ENCODE measurements at regions of chr3 and their contacts with region 1.

Region 1: GRCh38 chr3:53122933-53123305 is 7.3 kb downstream of the RFT1 start:
- DNase-seq: peak in 2 of 14 experiments; percentile 48 to 57
- ATAC-seq: no peak
- H3K4me3 ChIP-seq: no peak overlapping the region
- H3K4me3 Mint-ChIP-seq: no peak overlapping the region
- H3K27ac ChIP-seq: no peak overlapping the region
- H3K27ac Mint-ChIP-seq: no peak overlapping the region
- H3K4me1 ChIP-seq: no peaks in the 10 kb centered on the region
- H3K4me1 Mint-ChIP-seq: peaks cover 4% of the 10 kb centered on the region
- H3K27me3 ChIP-seq: no peaks in the 10 kb centered on the region
- H3K27me3 Mint-ChIP-seq: no peaks in the 10 kb centered on the region
- CTCF ChIP-seq: no peak

Region 2: GRCh38 chr3:53154881-53155291 is 32.0 kb after region 1 on chr3:
- CTCF ChIA-PET with region 1: no interaction called
- POLR2A ChIA-PET with region 1: no interaction called
- intact Hi-C with region 1: no loop called
- DNase-seq: no peak
- ATAC-seq: no peak
- H3K4me3 ChIP-seq: no peak overlapping the region
- H3K4me3 Mint-ChIP-seq: no peak overlapping the region
- H3K27ac ChIP-seq: no peak overlapping the region
- H3K27ac Mint-ChIP-seq: no peak overlapping the region
- H3K4me1 ChIP-seq: peaks cover 6% of the 10 kb centered on the region
- H3K4me1 Mint-ChIP-seq: no peaks in the 10 kb centered on the region
- H3K27me3 ChIP-seq: peaks cover 26 to 34% of the 10 kb centered on the region in 2 experiments
- H3K27me3 Mint-ChIP-seq: peaks cover 28% of the 10 kb centered on the region
- CTCF ChIP-seq: no peak

Region 3: DNA sequence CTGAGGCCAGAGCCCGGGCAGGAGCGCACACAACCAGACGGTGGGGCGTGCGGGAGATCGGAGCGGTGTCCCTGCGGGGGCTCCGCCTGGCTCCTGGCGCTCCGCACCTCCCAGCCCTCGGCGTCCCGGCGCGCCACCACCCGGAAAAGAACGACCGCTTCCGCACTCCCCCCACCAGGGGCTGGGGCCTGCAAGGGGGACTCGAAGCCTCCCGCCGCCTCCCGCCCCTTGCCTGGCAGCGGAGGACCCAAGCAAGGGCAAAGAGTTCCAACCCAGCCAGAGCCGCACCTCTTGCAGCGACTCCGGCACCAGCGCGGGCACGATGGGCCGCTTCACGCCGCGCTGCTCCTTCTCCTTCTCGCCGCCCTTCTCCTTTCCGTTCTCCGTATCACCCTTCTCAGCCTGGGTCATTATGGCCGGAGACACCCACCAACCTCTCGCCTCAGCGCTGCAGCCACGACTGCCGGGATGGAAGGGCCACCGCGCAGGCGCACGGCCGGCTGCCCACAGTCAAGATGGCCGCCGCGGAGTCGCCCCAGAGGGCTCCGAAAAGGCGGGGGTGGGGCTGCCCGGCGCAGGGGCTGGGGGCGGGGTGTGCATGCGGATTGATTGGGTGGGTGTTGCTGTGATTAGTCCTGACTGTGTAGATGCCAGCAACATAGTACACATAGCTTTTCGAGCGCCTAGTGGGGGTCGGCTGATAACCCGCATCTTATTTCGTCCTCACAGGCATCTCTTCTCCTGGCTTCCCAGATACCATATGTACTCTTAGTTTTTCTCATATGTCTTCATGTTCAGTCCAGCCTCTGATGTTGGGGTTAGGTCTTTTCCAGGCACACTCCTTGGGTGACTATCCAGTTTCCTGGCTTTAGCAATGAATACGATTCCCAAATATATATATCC is 759.0 kb after region 1 on chr3 and contains the start of gene ACTR8:
- CTCF ChIA-PET with region 1: no interaction called
- POLR2A ChIA-PET with region 1: no interaction called
- intact Hi-C with region 1: loop called in 1 of 2 experiments (anchors 10 kb)
- DNase-seq: peak; percentile 73 to 91 (median 83)
- ATAC-seq: peak; percentile 88
- H3K4me3 ChIP-seq: peak within 1 kb of the TSS; percentile 82
- H3K4me3 Mint-ChIP-seq: peak within 1 kb of the TSS; percentile 100
- H3K27ac ChIP-seq: peak within 1 kb of the TSS; percentile 65 to 78
- H3K27ac Mint-ChIP-seq: peak within 1 kb of the TSS; percentile 93
- H3K4me1 ChIP-seq: peaks cover 21% of the 10 kb centered on the region
- H3K4me1 Mint-ChIP-seq: peaks cover 44% of the 10 kb centered on the region
- H3K27me3 ChIP-seq: no peaks in the 10 kb centered on the region
- H3K27me3 Mint-ChIP-seq: no peaks in the 10 kb centered on the region
- CTCF ChIP-seq: no peak
- total RNA-seq, gene ACTR8: 13.7 to 14.3 TPM